BJ (cell line): ENCODE measurements at regions of chr1 and their contacts with region 1.

Region 1: DNA sequence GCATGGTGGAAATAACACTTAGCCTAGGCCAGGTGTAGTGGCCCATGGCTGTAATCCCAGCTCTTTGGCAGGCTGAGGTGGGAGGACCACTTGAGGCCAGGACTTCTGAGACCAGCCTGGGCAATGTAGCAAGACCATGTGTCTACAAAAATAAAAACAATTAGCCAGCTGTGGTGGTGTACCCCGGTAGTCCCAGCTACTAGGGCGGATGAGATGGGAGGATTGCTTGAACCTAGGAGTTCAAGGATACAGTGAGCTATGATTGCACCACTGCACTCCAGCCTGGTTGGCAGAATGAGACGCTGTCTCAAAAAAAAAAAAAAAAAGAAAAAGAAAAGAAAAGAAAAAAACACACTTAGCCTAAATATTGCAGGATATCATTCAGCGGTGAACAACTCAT is 20.9 kb downstream of the AK4 start:
- DNase-seq: no peak
- H3K4me3 ChIP-seq: no peak overlapping the region
- H3K27me3 ChIP-seq: peaks cover 1% of the 10 kb centered on the region
- CTCF ChIP-seq: no peak

Region 2: DNA sequence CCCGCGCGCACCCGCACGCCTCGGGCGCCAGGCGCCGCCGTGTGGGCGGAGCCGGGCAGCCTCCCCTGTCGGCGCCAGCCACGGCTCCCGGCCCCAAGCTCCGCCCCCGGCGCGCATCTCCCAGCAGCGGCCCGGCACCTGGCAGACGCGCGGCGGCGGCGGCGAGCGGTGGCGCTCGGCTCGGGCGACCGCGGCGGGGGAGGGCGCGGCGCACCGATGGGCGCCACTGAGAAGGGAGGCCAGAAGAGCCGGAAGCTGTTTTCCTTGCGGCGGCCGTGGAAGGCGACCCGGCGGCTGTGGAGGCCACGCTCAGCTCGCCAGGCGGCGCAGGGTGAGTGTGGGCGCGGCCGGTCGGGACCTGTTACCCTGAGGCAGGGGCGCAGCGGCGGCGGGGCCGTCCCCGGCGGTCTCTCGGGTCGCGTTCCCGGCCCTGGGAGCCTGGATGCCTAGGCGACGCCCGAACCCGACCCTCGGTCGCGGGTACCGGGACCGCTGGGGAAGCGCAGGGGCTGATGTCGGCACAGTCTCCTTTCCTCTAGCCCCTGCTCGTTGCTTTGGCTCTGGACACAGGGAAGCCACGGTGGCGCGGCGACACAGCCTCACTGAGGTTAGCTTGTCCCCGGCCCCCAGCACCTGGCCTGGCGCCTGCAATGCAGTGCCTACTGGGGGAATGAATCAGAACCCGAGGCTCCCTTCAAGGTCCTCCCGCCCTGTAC is 85.6 kb after region 1 on chr1:
- CTCF ChIA-PET with region 1: no interaction called
- POLR2A ChIA-PET with region 1: interaction called, 11 read pairs
- DNase-seq: no peak
- H3K4me3 ChIP-seq: peak overlapping the region; percentile 75
- H3K27me3 ChIP-seq: no peaks in the 10 kb centered on the region
- CTCF ChIP-seq: peak; percentile 22